AG04449 (cell line): ENCODE measurements at regions of chr14 and their contacts with region 1.

Region 1: GRCh38 chr14:104708606-104709268 is 15.3 kb upstream of the ADSS1 start:
- DNase-seq: no peak
- H3K4me3 ChIP-seq: no peak overlapping the region
- CTCF ChIP-seq: peak; percentile 95

Region 2: DNA sequence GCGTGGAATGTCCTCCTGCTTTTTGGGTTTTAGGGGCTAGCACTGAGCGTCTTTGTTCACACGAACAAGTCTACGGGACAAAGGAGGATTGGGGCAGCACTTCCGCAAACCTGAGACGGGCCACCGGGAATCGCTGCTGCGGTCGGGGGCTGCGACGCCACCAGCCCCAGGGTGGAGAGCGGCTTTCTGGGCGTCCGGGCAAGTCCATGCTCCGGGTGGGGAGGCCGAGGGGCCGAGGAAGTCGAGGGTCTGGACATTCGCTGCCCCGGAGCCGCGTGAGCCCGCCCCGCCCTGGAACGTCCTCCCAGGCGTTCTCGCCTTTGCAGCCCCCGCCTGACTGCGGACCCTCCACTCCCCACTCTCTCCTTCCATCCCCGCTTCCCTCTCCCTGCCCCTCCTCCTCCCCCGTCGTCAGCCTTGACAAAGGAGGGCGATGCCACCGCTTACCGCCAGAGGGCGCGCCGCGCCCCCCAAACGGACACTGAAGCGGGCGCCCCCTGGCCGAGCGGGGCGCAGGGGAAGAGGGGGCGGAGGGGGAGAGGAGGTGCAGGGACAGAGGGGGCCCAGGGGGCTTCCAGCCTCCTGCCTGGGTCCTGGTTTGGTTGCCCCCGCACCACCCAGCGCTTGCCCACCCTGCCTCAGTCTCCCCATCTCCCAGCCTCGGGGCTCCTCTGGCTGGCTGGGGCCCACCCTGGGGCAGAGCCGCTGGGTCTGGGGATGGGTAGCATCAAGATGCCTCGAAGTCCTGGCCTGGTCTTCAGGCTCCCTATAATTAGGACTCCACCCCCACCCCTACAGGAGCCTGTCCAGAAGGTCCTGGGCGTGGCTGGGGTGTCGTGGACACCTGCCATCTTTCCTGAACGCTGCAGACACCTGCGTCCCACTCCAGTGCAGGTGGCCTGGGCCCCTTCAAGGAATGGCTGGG is 58.4 kb before region 1 on chr14:
- CTCF ChIA-PET with region 1: interaction called, 24 read pairs
- POLR2A ChIA-PET with region 1: no interaction called
- DNase-seq: no peak
- H3K4me3 ChIP-seq: peak overlapping the region; percentile 68
- CTCF ChIP-seq: peak; percentile 100

Region 3: GRCh38 chr14:104680801-104681688 is 27.7 kb before region 1 on chr14:
- CTCF ChIA-PET with region 1: interaction called, 13 read pairs
- POLR2A ChIA-PET with region 1: no interaction called
- DNase-seq: no peak
- H3K4me3 ChIP-seq: peak overlapping the region; percentile 43
- CTCF ChIP-seq: peak; percentile 6

Region 4: GRCh38 chr14:104689109-104689880 is 19.4 kb before region 1 on chr14 and contains the start of gene INF2:
- CTCF ChIA-PET with region 1: interaction called, 18 read pairs
- POLR2A ChIA-PET with region 1: no interaction called
- DNase-seq: no peak
- H3K4me3 ChIP-seq: peak within 1 kb of the TSS; percentile 88
- CTCF ChIP-seq: no peak

Region 5: DNA sequence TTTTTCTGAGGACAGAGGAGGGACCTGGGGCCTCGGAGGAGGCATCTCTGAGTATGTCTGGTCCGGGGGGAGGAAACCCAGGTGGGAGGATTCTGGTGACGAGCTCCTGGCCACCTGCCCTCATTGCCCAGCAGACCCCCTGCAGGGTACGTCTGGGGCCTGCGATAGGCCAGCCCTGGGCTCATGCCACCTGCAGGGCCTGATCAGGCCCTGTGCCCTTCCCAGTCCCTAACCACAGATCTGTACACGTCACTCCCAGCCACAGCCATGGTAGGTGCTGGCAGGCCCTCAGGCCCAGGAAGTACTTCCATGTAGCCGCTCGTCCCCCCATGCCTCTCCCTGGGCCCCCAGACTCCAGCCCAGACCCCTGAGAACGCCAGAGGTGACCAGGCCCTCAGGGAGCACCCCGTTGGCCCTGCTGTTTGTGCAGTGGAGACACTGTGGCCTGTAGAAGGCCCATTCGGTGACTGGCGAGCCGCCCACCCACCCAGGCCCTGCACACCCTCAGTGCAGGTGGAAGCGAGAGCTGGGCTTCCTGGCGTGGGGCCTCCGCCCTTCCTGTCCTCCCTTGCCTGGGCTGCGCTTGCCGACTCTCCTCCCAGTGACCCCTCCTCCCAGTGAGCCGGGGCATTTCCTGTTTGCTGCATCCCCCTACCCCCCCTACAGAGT is 13.6 kb before region 1 on chr14:
- CTCF ChIA-PET with region 1: interaction called, 61 read pairs
- POLR2A ChIA-PET with region 1: interaction called, 3 read pairs
- DNase-seq: no peak
- H3K4me3 ChIP-seq: no peak overlapping the region
- CTCF ChIP-seq: no peak

Region 6: DNA sequence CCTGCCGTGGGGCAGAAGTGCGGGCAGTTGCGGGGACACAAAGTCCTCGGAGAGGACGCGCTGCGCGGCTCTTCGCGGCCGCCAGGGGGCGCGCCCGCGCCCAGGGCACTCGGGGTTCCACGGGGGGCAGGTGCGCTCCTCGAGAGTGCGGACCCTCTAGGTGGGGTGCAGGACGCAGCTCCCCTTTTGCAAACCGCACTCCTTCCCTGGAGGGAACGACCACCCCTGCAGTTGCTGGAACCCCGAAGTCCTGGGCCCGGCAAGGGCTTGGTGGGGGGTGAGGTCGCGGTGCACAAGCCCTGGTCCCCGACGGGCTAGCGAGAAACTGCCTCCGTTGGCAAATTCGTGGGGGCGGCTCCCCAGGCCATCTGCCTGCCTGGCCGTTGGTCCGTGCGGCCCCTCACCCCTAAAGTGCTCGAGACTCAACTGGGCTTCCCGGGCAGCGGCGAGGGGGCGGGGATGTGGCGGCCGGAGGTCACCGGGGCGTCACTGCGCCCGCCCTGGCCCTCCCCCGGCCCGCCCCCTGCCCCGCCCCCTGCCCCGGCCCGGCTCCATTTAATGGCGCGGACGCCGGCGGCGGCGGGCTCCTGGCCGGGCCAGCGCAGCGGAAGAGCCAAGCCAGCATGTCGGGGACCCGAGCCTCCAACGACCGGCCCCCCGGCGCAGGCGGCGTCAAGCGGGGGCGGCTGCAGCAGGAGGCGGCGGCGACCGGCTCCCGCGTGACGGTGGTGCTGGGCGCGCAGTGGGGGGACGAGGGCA is 15.1 kb after region 1 on chr14 and contains the start of gene ADSS1:
- CTCF ChIA-PET with region 1: interaction called, 57 read pairs
- POLR2A ChIA-PET with region 1: interaction called, 3 read pairs
- DNase-seq: no peak
- H3K4me3 ChIP-seq: peak within 1 kb of the TSS; percentile 58
- CTCF ChIP-seq: peak; percentile 82